Motor neuron (in vitro differentiated cells): ENCODE measurements at regions of chr15 and their contacts with region 1.

Region 1: GRCh38 chr15:50675536-50676144 is 11.0 kb downstream of the TRPM7 start:
- ATAC-seq: no peak
- H3K4me3 ChIP-seq: no peak overlapping the region
- H3K27ac ChIP-seq: no peak overlapping the region
- H3K4me1 ChIP-seq: no peaks in the 10 kb centered on the region

Region 2: DNA sequence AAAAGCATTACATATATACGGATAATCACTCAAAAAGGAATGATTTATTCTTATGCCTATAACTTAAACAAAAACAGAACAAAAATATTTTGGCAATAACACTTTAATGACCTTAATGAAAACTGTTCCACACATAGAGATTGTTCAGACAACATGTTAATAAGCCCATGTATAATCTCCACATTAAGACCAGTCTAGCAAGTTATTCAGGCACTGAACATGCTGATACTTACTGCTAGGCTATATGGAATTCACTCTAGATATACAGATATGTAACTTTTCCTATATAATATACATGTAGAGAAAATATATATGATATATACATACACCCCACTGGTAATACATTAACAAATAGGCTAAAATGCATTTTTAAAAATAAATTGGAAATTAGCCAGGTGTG is 85.4 kb before region 1 on chr15:
- in situ Hi-C with region 1: no loop called
- ATAC-seq: no peak
- H3K4me3 ChIP-seq: no peak overlapping the region
- H3K27ac ChIP-seq: no peak overlapping the region
- H3K4me1 ChIP-seq: no peaks in the 10 kb centered on the region

Region 3: DNA sequence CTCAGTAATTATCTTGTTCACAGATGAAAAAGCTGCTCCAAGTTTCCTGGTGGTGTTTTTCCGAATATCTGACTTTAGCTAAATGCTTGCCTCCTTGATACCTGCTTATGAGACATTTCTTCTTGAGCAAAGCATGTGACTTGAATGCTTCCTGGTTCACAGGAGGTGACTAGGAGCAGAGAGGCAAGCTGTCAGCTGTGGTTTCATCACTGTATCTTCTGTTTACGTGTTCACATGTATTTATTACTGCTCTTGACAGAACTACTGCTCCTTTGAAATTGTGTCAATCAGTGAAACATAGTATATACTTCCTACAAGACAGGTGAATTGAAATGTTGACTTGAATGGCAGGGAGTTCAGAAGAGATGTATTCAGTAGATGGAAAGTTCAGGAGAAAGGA is 98.8 kb after region 1 on chr15:
- in situ Hi-C with region 1: no loop called
- ATAC-seq: no peak
- H3K4me3 ChIP-seq: no peak overlapping the region
- H3K27ac ChIP-seq: no peak overlapping the region
- H3K4me1 ChIP-seq: no peaks in the 10 kb centered on the region

Region 4: GRCh38 chr15:50876989-50877360 is 201.3 kb after region 1 on chr15:
- in situ Hi-C with region 1: loop called in 3 of 9 experiments (anchors 10 to 25 kb)
- ATAC-seq: peak; percentile 38 to 84 (median 64)
- H3K4me3 ChIP-seq: peak overlapping the region in 1 of 5 donors; percentile 23
- H3K27ac ChIP-seq: no peak overlapping the region
- H3K4me1 ChIP-seq: peaks cover 0 to 5% of the 10 kb centered on the region in 2 donors